Activated T-helper 1 cell treated with anti-CD3 and anti-CD28 coated beads, Interleukin-12 subunit alpha, Interleukin-12 subunit beta, Interleukin-2, Interleukin-4 antibody, amounts not matched to agents 30 ng/mL and 10 ng/mL and 1 ng/mL, durations not matched to agents 14 hours and 24 hours and 36 hours (primary cell): ENCODE measurements at regions of chr1 and their contacts with region 1.

Region 1: DNA sequence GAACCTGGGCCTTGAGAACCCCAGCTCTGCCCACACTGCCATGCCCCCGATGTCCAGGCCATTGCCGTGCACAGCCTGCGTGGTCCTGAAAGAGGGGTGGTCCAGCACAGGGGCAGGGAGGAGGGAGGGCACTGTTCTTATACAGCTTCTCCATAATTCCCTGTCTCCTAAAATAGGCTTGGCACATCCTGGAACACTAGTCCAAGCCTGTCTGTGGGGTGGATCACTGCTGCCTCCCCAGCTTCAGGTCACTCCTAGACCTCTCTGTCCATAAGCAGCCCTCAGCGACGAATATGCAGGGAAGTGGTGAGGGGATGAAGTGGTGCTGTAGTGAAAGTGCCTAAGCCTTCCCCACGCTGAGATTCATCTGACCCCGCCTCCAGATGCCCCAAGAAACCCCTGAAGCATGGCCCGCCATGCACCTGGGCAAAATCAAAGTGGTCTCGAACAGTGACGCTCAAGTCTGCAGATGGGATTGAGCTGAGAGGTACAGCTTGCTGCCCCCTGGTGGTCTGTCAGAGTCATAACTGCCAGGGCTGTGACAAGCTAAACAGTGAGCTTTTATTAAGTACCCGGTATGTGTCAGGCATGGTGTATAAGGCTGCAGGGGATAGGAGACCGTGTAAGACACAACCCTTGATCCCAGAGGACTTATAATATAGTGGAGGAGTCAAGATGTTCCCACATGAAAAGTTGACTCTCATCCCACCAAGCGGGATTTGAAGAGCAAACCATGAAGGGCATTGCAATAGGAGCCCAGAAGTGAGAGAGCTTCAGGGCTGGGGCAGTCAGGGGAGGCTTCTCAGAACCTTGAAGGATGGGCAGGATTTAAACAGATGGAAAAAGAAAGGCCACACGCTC is 66.6 kb downstream of the FAM163A start:
- DNase-seq: peak; percentile 43
- H3K4me3 Mint-ChIP-seq: no peak overlapping the region
- H3K27ac Mint-ChIP-seq: no peak overlapping the region
- H3K4me1 Mint-ChIP-seq: peaks cover 11% of the 10 kb centered on the region
- H3K27me3 Mint-ChIP-seq: peaks cover 6% of the 10 kb centered on the region

Region 2: GRCh38 chr1:178774263-178774662 is 1035.5 kb before region 1 on chr1:
- intact Hi-C with region 1: loop called (anchors 2 kb)
- DNase-seq: no peak
- H3K4me3 Mint-ChIP-seq: no peak overlapping the region
- H3K27ac Mint-ChIP-seq: no peak overlapping the region
- H3K4me1 Mint-ChIP-seq: no peaks in the 10 kb centered on the region
- H3K27me3 Mint-ChIP-seq: peaks cover 2% of the 10 kb centered on the region

Region 3: DNA sequence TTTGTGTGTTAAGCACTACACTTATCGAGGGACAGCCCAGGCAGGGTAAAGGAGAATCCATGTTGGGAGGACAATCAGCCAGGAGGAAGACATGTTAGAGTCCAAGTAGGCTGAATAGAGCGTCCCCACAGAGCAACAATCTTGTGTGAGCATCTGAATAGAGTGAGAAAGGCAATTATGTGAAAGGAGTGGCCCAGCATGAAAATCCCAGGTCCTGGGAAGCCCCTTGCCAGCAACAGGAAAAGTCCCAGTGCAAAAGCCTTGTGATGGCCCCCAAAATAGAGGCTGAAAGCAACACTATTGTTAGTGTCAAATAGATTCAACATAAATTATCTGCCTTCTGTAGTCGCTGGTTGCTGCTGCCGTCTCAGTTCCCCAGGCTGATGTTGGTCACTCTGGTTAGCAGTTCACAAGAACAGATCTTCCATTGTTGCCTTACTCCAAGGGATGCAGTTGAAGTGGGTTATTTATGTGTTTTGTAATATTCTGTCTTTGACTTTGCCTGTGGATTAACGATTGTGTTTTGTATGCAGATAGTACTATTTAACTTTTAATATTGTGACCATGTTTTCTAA is 568.1 kb before region 1 on chr1:
- intact Hi-C with region 1: loop called (anchors 10 kb)
- DNase-seq: no peak
- H3K4me3 Mint-ChIP-seq: no peak overlapping the region
- H3K27ac Mint-ChIP-seq: no peak overlapping the region
- H3K4me1 Mint-ChIP-seq: no peaks in the 10 kb centered on the region
- H3K27me3 Mint-ChIP-seq: no peaks in the 10 kb centered on the region

Region 4: DNA sequence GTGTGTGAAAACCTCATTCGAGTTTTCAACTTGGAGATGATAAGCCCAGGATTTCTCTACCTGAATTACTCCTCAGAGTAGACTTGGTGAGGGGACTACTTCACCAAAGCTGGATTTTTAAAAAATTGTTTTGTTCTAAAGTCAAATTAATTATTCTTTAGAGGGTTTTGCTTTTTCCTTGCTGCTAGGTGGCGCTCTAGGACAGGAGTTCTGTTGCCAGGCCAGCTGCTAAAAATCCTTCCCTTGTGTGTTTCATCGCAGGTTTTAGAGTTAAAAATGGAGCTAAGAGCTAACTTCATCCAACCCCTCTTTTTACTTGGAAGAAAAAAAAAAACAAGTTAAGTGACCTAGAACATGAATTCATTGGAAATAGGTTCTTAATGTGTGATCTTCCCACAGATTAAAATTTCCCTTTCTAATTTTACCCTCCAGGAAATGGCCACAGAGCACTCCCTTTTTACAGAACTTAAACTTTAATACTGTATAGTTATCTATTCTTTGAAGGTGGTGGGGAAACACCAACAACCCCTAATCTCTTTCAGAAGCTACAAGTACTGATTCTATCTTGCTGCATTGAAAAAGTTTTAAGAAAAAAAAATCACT is 103.3 kb before region 1 on chr1:
- intact Hi-C with region 1: loop called (anchors 1 kb)
- DNase-seq: peak; percentile 47
- H3K4me3 Mint-ChIP-seq: no peak overlapping the region
- H3K27ac Mint-ChIP-seq: no peak overlapping the region
- H3K4me1 Mint-ChIP-seq: peaks cover 25% of the 10 kb centered on the region
- H3K27me3 Mint-ChIP-seq: peaks cover 3% of the 10 kb centered on the region

Region 5: GRCh38 chr1:180229152-180229973 is 419.6 kb after region 1 on chr1:
- intact Hi-C with region 1: no loop called
- DNase-seq: no peak
- H3K4me3 Mint-ChIP-seq: peak overlapping the region; percentile 78
- H3K27ac Mint-ChIP-seq: no peak overlapping the region
- H3K4me1 Mint-ChIP-seq: peaks cover 21% of the 10 kb centered on the region
- H3K27me3 Mint-ChIP-seq: peaks cover 66% of the 10 kb centered on the region